AG04449 (cell line): ENCODE measurements at regions of chr2 and their contacts with region 1.

Region 1: GRCh38 chr2:651951-652373 is 25.2 kb downstream of the TMEM18 start:
- DNase-seq: no peak
- H3K4me3 ChIP-seq: no peak overlapping the region
- CTCF ChIP-seq: no peak

Region 2: GRCh38 chr2:535222-535621 is 116.7 kb before region 1 on chr2:
- CTCF ChIA-PET with region 1: no interaction called
- POLR2A ChIA-PET with region 1: no interaction called
- DNase-seq: no peak
- H3K4me3 ChIP-seq: no peak overlapping the region
- CTCF ChIP-seq: no peak

Region 3: GRCh38 chr2:626491-627339 is 25.2 kb before region 1 on chr2:
- CTCF ChIA-PET with region 1: no interaction called
- POLR2A ChIA-PET with region 1: no interaction called
- DNase-seq: no peak
- H3K4me3 ChIP-seq: no peak overlapping the region
- CTCF ChIP-seq: no peak

Region 4: DNA sequence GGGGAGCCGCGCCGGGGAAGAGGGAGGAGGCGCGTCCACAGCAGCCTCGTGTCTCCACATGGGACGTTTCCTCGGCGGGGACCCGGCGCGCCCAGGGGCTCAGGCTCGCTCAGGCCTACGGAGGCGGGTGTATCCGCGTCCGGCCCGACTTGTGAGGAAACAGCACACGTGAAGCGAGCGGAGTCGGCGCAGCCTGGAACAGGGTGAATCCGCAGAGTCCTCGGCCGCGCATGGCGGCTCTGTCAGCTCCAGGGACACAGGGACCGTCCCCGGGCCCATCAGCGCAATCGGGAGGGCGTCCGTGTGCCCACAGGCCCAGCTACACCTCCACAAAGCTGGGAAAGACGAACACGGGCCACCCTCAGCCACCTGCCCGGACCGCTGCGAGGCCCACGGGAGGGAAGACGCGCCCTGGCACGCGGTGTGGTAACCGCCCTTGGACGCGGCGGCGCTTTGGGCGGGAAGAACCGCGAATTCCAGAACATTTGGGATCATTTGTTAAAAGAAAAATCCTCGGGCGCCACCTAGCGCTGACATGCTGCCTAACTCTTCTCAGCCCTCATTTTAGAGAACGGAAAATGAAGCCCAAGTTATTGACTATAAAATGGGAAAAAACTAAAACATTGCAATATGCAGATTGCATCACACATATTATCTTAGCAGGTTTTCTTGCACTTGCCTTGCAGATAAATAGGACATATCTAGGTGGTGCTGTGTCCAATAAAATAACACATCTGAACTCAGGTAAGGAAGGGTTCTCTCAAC is 15.1 kb before region 1 on chr2:
- CTCF ChIA-PET with region 1: interaction called, 12 read pairs
- POLR2A ChIA-PET with region 1: no interaction called
- DNase-seq: no peak
- H3K4me3 ChIP-seq: peak overlapping the region; percentile 47
- CTCF ChIP-seq: peak; percentile 65